HCT116 (cell line): ENCODE measurements at regions of chr17 and their contacts with region 1.

Region 1: DNA sequence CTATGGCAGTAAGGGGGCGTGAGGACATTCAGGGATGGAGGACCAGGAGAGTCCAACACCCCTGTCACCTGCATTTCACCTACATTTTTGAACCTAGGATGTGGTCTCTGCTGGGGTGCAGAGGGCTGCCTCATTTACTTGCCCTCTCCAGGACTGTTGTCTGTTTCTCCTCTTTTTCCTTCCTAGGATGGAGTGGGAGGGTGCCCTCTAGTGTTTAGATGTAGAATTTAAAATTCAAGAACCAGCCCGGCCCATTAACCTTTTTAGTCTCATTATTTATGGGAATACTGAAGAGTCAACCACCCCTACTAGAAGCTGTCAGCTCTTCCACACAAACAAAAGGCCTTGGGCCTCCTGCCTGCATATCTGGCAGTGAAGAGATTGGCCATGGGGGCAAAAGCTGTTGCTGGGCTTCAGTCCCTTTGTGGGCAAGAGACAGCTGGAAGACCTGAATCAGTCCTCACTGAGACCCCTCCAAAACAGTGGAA is 2.5 kb upstream of the STARD3 start:
- DNase-seq: no peak
- ATAC-seq: no peak
- H3K4me3 ChIP-seq: no peak overlapping the region
- H3K27ac ChIP-seq: no peak overlapping the region
- H3K4me1 ChIP-seq: peaks cover 60 to 78% of the 10 kb centered on the region in 2 experiments
- H3K27me3 ChIP-seq: no peaks in the 10 kb centered on the region
- CTCF ChIP-seq: peak; percentile 64 to 97 (median 83); a peak in 5 of 6 replicates
- POLR2A ChIP-seq: no peak
- RAD21 ChIP-seq: no peak; the same call in 1 of the 2 replicates

Region 2: DNA sequence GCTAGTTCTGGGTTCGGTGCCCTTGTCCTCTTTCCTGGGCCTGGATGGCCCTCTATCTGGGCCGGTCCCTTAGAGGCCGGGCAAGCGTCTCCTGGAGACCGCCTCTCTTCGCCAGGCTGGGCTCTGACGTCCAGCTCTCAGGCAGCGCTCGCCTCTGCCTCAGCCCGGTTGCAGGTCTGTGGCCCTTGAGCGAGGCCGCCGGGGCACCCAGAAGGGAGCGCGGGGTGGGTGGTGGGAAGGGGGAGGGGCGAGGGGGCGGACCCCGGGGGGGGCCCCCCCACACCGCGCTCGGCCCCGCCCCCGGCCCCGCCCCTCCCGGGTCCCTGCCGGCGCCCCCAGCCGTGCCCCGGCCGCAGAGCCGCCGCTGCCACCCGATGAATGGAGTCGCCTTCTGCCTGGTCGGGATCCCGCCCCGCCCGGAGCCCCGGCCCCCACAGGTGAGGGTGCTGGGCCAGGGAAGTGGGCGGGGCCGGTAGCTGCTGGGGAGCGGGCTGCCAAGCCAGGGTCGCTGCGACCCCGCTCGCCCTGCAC is 1206.3 kb before region 1 on chr17 and contains the start of gene ARHGAP23:
- CTCF ChIA-PET with region 1: no interaction called
- POLR2A ChIA-PET with region 1: no interaction called
- RAD21 ChIA-PET with region 1: no interaction called
- intact Hi-C with region 1: no loop called
- DNase-seq: no peak
- ATAC-seq: peak; percentile 66
- H3K4me3 ChIP-seq: peak within 1 kb of the TSS; percentile 64 to 81
- H3K27ac ChIP-seq: peak within 1 kb of the TSS; percentile 62
- H3K4me1 ChIP-seq: peaks cover 22 to 44% of the 10 kb centered on the region in 2 experiments
- H3K27me3 ChIP-seq: no peaks in the 10 kb centered on the region
- CTCF ChIP-seq: no peak
- POLR2A ChIP-seq: no peak
- RAD21 ChIP-seq: no peak
- total RNA-seq, gene ARHGAP23: 41.0 TPM

Region 3: DNA sequence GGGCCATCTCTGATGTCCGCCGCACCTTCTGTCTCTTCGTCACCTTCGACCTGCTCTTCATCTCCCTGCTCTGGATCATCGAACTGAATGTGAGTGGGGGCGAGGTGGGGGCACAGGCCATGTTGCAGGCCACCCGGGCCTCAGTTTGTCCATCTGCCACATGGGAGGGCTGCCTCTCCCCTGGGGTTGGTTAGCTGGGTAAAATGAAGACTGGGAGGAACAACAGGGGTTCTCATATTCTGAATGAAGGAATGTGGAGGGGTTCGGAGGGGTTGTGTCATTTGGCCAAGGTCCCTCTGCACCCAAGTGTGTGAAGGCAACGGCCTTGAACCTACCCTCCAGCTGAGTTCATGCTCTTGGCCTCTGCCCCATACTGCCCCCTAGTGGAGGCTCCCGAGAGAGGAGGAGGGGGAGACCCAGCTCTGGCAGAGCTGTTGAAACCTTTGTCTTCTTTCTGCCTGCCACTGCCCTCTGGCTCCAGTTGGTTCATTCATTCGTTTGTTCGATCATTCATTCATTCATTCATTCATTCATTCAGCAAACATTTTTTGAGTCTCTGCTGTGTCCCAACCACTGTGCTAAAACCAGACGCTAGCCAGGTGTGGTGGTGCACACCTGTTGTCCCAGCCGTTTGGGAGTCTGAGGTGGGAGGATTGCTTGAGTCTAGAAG is 19.4 kb after region 1 on chr17:
- CTCF ChIA-PET with region 1: interaction called, 22 read pairs
- POLR2A ChIA-PET with region 1: interaction called, 3 read pairs
- RAD21 ChIA-PET with region 1: no interaction called
- intact Hi-C with region 1: no loop called
- DNase-seq: no peak
- ATAC-seq: peak; percentile 76
- H3K4me3 ChIP-seq: no peak overlapping the region
- H3K27ac ChIP-seq: no peak overlapping the region; the same call in 1 of the 2 replicates
- H3K4me1 ChIP-seq: peaks cover 13 to 52% of the 10 kb centered on the region in 2 experiments
- H3K27me3 ChIP-seq: no peaks in the 10 kb centered on the region
- CTCF ChIP-seq: peak; percentile 70 to 99 (median 98); a peak in 5 of 6 replicates
- POLR2A ChIP-seq: no peak
- RAD21 ChIP-seq: no peak; the same call in none of the 2 replicates